Dendritic cell treated with granulocyte-macrophage colony-stimulating factor and Interleukin-4, amounts not matched to agents 40 ng/mL and 50 ng/mL, for 4 days (primary cell): ENCODE measurements at regions of chr18 and their contacts with region 1.

Region 1: DNA sequence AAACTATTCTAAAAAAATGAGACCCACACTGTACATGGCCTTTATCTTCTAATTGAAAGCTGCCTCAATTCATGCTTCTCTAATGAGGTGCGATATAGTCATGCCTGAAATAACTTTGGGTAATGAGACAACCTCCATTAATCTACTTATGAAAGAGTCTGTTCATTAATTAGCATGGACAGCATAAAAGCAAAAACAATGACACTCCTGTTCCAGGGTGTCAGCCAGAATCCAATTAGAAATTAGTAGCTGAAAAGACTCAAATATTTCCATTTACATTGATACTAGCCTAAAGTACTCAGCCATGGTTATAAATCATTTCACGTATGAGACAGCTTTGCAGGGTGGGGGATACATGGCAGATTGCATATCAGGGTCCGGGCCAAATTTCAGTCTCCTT is 288.7 kb downstream of the AKAIN1 start:
- H3K4me3 Mint-ChIP-seq: no peak overlapping the region
- H3K27ac Mint-ChIP-seq: no peak overlapping the region
- H3K4me1 Mint-ChIP-seq: no peaks in the 10 kb centered on the region
- H3K27me3 Mint-ChIP-seq: no peaks in the 10 kb centered on the region

Region 2: GRCh38 chr18:4720518-4720917 is 187.8 kb before region 1 on chr18:
- intact Hi-C with region 1: loop called (anchors 10 kb)
- H3K4me3 Mint-ChIP-seq: no peak overlapping the region
- H3K27ac Mint-ChIP-seq: no peak overlapping the region
- H3K4me1 Mint-ChIP-seq: no peaks in the 10 kb centered on the region
- H3K27me3 Mint-ChIP-seq: no peaks in the 10 kb centered on the region

Region 3: GRCh38 chr18:5137261-5137660 is 228.9 kb after region 1 on chr18:
- intact Hi-C with region 1: no loop called
- H3K4me3 Mint-ChIP-seq: no peak overlapping the region
- H3K27ac Mint-ChIP-seq: no peak overlapping the region
- H3K4me1 Mint-ChIP-seq: no peaks in the 10 kb centered on the region
- H3K27me3 Mint-ChIP-seq: no peaks in the 10 kb centered on the region